Right cardiac atrium (tissue), 5 donors: ENCODE measurements at regions of chr16 and their contacts with region 1.

Region 1: DNA sequence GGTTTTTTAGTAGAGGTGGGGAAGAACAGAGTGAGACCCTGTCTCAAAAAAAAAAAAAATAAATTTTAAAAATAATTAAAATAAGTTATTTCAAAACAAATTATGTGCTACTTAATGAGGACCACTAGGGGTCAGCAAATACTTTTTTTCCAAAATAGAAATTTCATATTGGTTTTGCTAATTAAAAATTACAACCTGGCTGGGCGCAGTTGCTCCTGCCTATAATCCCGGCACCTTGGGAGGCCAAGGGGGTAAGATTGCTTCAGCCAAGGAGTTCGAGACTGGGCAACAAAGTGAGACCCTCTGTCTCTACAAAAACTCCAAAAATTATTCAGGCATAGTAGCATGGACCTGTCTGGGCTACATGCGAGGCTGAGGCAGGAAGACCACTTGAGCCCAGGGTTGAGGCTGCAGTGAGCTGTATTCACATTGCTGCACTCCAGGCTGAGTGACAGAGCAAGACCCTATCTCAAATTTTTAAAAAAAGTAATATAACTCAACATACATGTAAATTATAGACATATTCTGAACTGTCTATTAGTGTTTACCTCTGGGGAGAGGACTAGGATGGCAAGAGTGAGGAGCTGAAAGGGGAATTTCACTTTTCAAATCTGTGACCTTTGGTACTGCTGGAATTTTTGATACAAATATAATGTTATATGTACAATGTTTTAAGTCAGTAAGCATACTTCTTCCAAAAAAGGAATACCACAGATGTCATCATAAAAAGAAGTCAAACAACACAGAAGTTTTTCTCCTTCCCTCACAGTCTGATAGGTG is 8.1 kb downstream of the MEIOB start:
- DNase-seq: no peak
- ATAC-seq: no peak
- H3K4me3 ChIP-seq: no peak overlapping the region
- H3K27ac ChIP-seq: no peak overlapping the region
- H3K4me1 ChIP-seq: no peaks in the 10 kb centered on the region
- H3K27me3 ChIP-seq: no peaks in the 10 kb centered on the region

Region 2: GRCh38 chr16:1929578-1930337 is 65.9 kb after region 1 on chr16:
- intact Hi-C with region 1: loop called (anchors 2 to 10 kb)
- DNase-seq: peak; percentile 89 to 97 (median 96)
- ATAC-seq: peak; percentile 93 to 95
- H3K4me3 ChIP-seq: peak overlapping the region; percentile 72
- H3K27ac ChIP-seq: no peak overlapping the region
- H3K4me1 ChIP-seq: no peaks in the 10 kb centered on the region
- H3K27me3 ChIP-seq: no peaks in the 10 kb centered on the region

Region 3: DNA sequence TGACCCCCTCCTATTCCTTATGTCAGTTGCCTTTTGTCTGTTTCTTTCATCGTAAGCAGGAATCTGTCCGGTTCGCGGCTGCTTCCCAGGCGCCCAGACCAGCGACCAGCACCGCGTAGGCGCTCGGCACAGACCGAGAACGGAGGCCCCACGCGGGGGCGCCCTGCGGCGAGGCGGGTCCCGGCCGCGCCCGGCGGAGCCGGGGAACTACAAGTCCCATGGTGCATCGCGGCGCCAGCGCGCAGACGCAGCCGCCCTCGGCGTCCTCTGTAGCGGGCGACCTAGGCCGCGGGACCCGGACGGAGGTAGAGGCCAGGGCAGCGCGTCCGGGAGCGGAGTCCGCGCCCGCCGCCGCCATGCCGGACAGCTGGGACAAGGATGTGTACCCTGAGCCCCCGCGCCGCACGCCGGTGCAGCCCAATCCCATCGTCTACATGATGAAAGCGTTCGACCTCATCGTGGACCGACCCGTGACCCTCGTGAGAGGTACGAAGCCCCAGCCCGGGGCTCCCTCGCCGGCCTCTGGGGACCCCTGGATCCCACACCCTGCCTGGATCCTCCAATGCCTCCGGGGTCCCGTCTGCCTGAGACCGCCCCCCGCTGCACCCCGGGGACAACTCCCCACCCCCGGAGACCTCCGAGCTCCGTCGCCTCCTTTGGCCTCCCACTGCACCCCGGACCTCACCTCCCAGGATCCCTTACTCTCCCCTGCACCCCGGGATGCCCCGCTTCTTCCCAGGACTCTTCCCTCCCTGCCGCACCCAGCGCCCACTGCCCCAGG is 95.6 kb after region 1 on chr16 and contains the start of gene NDUFB10:
- intact Hi-C with region 1: no loop called
- DNase-seq: peak; percentile 94 to 98 (median 98)
- ATAC-seq: peak; percentile 93 to 95
- H3K4me3 ChIP-seq: peak within 1 kb of the TSS; percentile 89
- H3K27ac ChIP-seq: peak within 1 kb of the TSS; percentile 95
- H3K4me1 ChIP-seq: peaks cover 10% of the 10 kb centered on the region
- H3K27me3 ChIP-seq: no peaks in the 10 kb centered on the region
- total RNA-seq, gene NDUFB10: 397 to 535 (median 467) TPM